ENCODE measurements at regions of chr17 and their contacts with region 1.

Region 1: GRCh38 chr17:72388765-72389473 is 268.1 kb downstream of the SOX9 start:
- DNase-seq: no peak
- ATAC-seq: no peak
- H3K4me3 ChIP-seq: no peak overlapping the region
- H3K27ac ChIP-seq: no peak overlapping the region
- H3K4me1 ChIP-seq: peaks cover 43% of the 10 kb centered on the region
- H3K27me3 ChIP-seq: no peaks in the 10 kb centered on the region
- CTCF ChIP-seq: peak; percentile 22; the same call in 1 of the 2 replicates
- POLR2A ChIP-seq: no peak
- RAD21 ChIP-seq: 0 out of 2 replicates have a peak, but pooled peaks have one; percentile 22

Region 2: DNA sequence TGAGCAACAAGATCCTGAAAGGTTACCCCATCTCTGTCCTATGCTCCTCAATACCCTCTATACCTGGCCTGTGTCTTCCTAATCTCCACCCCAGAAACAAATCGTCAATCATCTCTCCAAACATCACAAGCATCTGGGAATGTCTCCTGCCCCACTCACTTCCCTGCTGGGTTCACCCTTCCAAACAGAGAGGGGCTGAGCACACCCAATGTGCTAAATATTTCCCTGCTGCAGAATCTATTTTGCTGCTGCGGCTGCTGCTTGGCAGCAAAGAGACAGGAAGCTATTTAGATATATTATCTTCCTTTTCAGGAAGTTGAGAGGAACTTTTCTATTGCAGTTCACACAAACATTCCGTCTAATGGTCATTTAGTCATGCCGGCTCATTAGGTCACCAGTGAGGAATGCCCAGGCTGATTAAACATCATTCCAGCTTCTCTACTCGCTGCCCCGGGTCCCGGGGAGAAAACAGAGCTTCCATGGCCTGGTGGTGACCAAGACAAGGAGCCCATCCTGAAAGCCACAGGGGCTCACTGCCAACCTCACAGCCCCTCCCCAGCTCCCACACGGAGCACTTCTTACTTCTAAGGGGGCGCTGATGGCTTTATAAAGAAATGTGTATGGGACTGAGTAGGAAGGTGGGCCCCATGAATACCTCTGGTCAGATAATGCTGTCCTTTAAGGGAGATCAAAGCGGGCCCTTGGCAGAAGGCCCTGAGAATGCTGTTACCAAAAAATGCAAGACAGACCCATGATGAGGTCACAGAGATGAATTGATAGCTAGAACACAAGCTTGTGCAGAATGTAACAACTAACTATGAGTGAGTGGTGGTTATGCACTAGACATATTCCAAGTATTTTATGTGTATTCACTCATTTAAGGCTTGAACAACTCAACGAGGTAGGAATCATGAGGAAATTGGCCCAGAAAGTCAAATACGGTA is 49.8 kb before region 1 on chr17:
- CTCF ChIA-PET with region 1: no interaction called
- POLR2A ChIA-PET with region 1: no interaction called
- dilution Hi-C with region 1: no loop called
- in situ Hi-C with region 1: no loop called
- intact Hi-C with region 1: loop called (anchors 5 kb)
- DNase-seq: peak; percentile 97
- ATAC-seq: peak; percentile 89
- H3K4me3 ChIP-seq: no peak overlapping the region
- H3K27ac ChIP-seq: peak overlapping the region; percentile 86
- H3K4me1 ChIP-seq: peaks cover 23% of the 10 kb centered on the region
- H3K27me3 ChIP-seq: no peaks in the 10 kb centered on the region
- CTCF ChIP-seq: no peak
- POLR2A ChIP-seq: peak; percentile 53; the same call in 1 of the 2 replicates
- RAD21 ChIP-seq: peak; percentile 23; the same call in 1 of the 2 replicates

Region 3: GRCh38 chr17:72358465-72358864 is 30.5 kb before region 1 on chr17:
- CTCF ChIA-PET with region 1: no interaction called
- POLR2A ChIA-PET with region 1: interaction called, 19 read pairs
- dilution Hi-C with region 1: no loop called
- in situ Hi-C with region 1: no loop called
- intact Hi-C with region 1: no loop called
- DNase-seq: peak; percentile 86
- ATAC-seq: peak; percentile 19; the same call in 1 of the 2 replicates
- H3K4me3 ChIP-seq: no peak overlapping the region
- H3K27ac ChIP-seq: no peak overlapping the region
- H3K4me1 ChIP-seq: peaks cover 17% of the 10 kb centered on the region
- H3K27me3 ChIP-seq: no peaks in the 10 kb centered on the region
- CTCF ChIP-seq: no peak
- POLR2A ChIP-seq: no peak
- RAD21 ChIP-seq: no peak

Region 4: DNA sequence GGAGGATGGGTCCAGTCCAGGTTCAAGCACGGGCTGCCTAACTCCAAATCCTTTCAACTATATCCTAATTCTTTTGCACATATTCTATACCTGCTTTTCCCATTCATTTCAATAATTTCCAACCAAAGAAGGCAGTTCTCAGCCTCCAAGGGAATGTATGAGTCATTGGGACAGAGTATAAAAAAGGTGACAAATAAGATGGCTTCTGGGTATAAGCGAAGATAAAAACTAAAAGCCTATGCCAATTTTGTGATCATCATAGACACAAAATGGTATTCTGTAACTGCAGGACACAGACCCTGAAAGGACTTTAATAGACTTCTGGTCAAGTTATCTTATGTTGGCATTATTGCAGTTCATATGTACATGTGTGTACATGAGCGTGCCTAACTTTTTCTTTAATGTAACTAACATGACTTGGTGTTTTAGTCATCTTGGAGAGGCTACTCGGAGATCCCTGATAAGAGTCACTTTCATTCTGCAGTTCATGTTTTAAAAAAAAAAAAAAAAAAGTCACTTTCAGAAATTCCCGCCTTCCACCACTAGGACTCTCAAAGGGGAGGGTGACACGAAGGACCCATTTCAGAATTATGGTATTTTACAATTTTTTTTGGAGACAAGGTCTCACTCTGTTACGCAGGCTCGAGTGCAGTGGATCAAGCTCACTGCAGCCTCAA is 821.2 kb after region 1 on chr17:
- CTCF ChIA-PET with region 1: no interaction called
- POLR2A ChIA-PET with region 1: no interaction called
- dilution Hi-C with region 1: no loop called
- in situ Hi-C with region 1: loop called (anchors 25 kb)
- intact Hi-C with region 1: no loop called
- DNase-seq: no peak
- ATAC-seq: peak; percentile 13
- H3K4me3 ChIP-seq: no peak overlapping the region
- H3K27ac ChIP-seq: no peak overlapping the region
- H3K4me1 ChIP-seq: no peaks in the 10 kb centered on the region
- H3K27me3 ChIP-seq: no peaks in the 10 kb centered on the region
- CTCF ChIP-seq: peak; percentile 32; the same call in 1 of the 2 replicates
- POLR2A ChIP-seq: no peak
- RAD21 ChIP-seq: peak; percentile 21; the same call in 1 of the 2 replicates

Measured in IMR-90 (cell line).